PC-9 (cell line): ENCODE measurements at regions of chr1 and their contacts with region 1.

Region 1: DNA sequence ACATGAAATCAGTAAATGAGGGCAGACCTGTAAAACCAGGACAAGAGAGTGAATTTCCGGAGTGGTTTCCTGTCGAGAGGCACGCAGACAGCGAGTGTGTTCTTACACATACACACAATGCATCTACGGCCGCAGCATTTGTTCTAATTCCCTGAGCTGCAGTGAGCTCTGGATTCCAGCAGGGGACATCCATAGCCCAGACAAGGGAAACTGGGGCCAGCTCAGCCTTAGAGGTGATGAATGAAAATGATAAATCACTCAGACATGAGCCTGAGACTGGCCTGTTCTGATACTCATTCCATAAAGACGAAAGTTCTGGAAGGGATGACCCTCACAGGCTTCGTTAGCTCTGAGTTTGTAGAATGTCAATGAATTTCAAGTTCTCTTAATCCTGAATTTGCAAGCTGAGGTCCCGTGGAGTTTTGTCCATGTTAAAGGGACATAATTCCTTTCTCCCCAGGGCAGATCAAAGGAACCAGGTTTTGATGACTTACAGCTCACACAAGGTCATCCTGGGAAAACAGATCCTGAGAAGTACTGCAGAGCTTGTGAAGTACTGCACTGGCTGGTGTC is 207.9 kb upstream of the C1orf87 start:
- DNase-seq: peak; percentile 54 to 59
- H3K4me3 ChIP-seq: no peak overlapping the region
- H3K27ac ChIP-seq: no peak overlapping the region
- H3K4me1 ChIP-seq: peaks cover 25% of the 10 kb centered on the region
- H3K27me3 ChIP-seq: no peaks in the 10 kb centered on the region
- CTCF ChIP-seq: peak; percentile 93

Region 2: DNA sequence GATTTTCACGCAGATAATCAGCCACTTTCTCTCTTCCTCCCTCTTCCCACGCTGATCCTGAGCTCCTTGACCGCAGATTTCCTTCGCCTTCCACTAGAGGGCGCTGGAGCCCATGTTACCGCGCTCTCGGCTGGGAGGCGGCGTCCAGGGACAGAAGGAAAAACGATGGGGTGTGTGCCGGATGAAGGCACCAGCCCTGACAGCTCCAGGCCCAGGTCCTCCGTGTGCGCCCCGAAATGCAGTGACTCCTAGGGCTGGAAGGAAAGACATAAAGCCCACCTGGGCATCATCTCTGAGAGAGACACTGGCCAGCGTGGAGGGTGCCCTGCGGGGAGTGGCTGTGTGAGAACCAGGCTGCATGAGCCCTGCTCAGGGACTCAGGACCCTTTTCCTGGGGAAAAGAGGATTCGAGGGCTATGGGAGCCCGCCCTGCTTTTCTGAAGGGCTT is 310.0 kb before region 1 on chr1:
- CTCF ChIA-PET with region 1: no interaction called
- POLR2A ChIA-PET with region 1: no interaction called
- intact Hi-C with region 1: loop called (anchors 10 kb)
- DNase-seq: peak; percentile 50 to 74
- H3K4me3 ChIP-seq: no peak overlapping the region
- H3K27ac ChIP-seq: no peak overlapping the region
- H3K4me1 ChIP-seq: no peaks in the 10 kb centered on the region
- H3K27me3 ChIP-seq: 0 out of 2 replicates have a peak, but pooled peaks cover 4% of the 10 kb centered on the region
- CTCF ChIP-seq: peak; percentile 94

Region 3: GRCh38 chr1:60765204-60765603 is 483.8 kb after region 1 on chr1:
- CTCF ChIA-PET with region 1: interaction called, 17 read pairs
- POLR2A ChIA-PET with region 1: no interaction called
- intact Hi-C with region 1: loop called (anchors 1 kb)
- DNase-seq: peak in 1 of 2 experiments; percentile 12
- H3K4me3 ChIP-seq: no peak overlapping the region
- H3K27ac ChIP-seq: no peak overlapping the region
- H3K4me1 ChIP-seq: no peaks in the 10 kb centered on the region
- H3K27me3 ChIP-seq: no peaks in the 10 kb centered on the region
- CTCF ChIP-seq: peak; percentile 74

Region 4: GRCh38 chr1:60848583-60849188 is 567.2 kb after region 1 on chr1:
- CTCF ChIA-PET with region 1: interaction called, 8 read pairs
- POLR2A ChIA-PET with region 1: no interaction called
- intact Hi-C with region 1: loop called (anchors 5 kb)
- DNase-seq: peak in 1 of 2 experiments; percentile 8
- H3K4me3 ChIP-seq: no peak overlapping the region
- H3K27ac ChIP-seq: no peak overlapping the region
- H3K4me1 ChIP-seq: no peaks in the 10 kb centered on the region
- H3K27me3 ChIP-seq: no peaks in the 10 kb centered on the region
- CTCF ChIP-seq: peak; percentile 87

Region 5: DNA sequence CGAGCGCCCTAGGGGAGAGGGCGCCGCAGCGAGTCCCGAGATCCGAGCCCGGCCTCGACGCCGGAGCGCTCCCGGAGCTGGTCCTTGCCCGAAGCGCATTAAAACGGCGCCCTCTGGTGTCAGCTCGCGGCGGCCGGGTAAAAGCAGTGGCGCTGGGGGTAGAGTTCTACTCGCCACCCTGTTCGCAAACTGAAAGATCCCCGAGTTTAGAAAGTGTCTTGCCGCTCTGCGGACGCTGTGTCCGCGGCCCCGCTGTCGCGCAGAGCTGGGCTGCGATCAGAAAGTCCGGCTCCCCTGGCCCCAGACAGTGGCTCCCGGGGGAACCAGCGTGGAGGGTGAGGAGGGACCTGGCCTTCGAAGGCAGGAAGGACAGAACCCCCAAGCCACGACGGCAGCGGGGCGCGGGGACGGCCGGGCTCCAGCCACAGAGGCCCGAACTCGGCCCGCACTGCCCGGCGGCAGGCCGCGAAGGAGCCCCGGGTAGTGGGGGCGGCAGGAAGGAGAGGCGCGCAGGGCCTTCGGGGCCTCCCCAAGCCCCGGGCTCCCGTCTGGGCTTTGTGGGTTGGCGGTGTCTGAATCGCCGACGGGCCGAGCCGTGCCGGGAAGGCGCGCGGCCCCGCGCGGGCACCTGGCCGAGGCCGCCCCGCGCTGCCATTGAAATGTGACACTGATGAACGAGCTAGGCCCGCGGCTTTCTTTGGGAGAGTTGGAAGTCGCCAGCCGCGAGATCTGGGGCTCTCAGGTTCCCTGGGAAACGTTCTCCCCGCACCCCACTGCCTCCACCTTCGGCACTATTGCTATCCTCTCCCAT is 761.8 kb after region 1 on chr1:
- CTCF ChIA-PET with region 1: interaction called, 3 read pairs
- POLR2A ChIA-PET with region 1: no interaction called
- intact Hi-C with region 1: loop called (anchors 2 kb)
- DNase-seq: peak; percentile 40 to 90
- H3K4me3 ChIP-seq: peak overlapping the region; percentile 59
- H3K27ac ChIP-seq: no peak overlapping the region
- H3K4me1 ChIP-seq: no peaks in the 10 kb centered on the region
- H3K27me3 ChIP-seq: no peaks in the 10 kb centered on the region
- CTCF ChIP-seq: peak; percentile 81

Region 6: DNA sequence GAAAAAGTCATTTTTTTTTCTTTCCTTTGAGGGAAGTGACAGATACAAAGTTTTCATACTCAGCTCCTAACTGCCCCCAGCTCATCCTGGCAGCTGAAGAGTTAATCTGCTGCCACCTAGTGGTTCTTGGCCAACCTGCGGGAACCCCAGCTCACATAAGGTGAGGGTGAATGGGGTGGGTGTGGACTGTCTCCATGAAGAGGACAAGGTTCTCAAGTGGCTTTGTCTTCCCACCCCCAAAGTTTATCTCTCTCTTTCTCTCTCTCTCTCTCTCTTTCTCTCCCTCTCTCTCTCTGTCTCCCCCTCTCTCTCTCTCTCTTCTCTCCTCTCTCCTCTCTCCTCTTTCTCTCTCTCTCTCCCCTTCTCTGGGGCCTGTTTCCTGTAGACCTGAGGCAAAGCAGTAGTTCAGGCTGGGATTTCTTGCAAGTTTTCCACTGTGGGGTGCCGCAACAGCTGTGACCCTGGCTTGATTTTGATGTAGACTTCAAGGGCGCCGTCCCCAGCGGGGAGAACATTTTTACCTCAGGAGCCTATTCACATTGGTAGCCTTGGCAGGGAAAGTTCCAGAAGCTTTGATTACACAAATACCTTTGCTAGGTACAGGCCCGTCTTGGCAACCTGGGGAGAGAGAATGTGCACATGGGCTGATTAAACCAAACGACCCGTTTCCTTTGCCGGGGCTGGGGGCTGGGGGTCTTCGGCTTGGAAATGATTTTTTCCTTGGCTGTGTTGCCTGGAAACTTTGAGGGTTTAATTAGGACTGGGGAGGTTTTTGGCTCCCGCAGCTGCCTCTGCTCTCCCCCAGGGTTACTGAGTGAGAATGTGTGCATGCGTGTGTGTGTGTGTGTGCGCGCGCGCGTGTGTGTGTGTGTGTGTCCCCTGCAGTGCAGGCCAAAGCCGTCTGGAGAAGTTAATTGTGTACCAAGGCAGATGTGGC is 1307.6 kb after region 1 on chr1:
- CTCF ChIA-PET with region 1: no interaction called
- POLR2A ChIA-PET with region 1: no interaction called
- intact Hi-C with region 1: loop called (anchors 1 kb)
- DNase-seq: peak; percentile 53 to 69
- H3K4me3 ChIP-seq: no peak overlapping the region
- H3K27ac ChIP-seq: no peak overlapping the region
- H3K4me1 ChIP-seq: no peaks in the 10 kb centered on the region
- H3K27me3 ChIP-seq: no peaks in the 10 kb centered on the region
- CTCF ChIP-seq: peak; percentile 90

Region 7: GRCh38 chr1:61851849-61852669 is 1570.6 kb after region 1 on chr1:
- CTCF ChIA-PET with region 1: interaction called, 6 read pairs
- POLR2A ChIA-PET with region 1: no interaction called
- intact Hi-C with region 1: loop called (anchors 5 kb)
- DNase-seq: peak in 1 of 2 experiments; percentile 37
- H3K4me3 ChIP-seq: no peak overlapping the region
- H3K27ac ChIP-seq: no peak overlapping the region
- H3K4me1 ChIP-seq: no peaks in the 10 kb centered on the region
- H3K27me3 ChIP-seq: no peaks in the 10 kb centered on the region
- CTCF ChIP-seq: peak; percentile 78